ENCODE measurements at regions of chr3 and their contacts with region 1.

Region 1: GRCh38 chr3:194632809-194633348 is 340 bp downstream of the TMEM44 start:
- DNase-seq: no peak
- H3K4me3 ChIP-seq: peak overlapping the region; percentile 74
- H3K27ac ChIP-seq: no peak overlapping the region
- H3K4me1 ChIP-seq: no peaks in the 10 kb centered on the region
- H3K27me3 ChIP-seq: no peaks in the 10 kb centered on the region
- CTCF ChIP-seq: no peak

Region 2: GRCh38 chr3:194472290-194472920 is 160.5 kb before region 1 on chr3:
- CTCF ChIA-PET with region 1: interaction called, 3 read pairs
- POLR2A ChIA-PET with region 1: interaction called, 6 read pairs
- intact Hi-C with region 1: loop called (anchors 2 kb)
- DNase-seq: peak; percentile 31 to 67
- H3K4me3 ChIP-seq: no peak overlapping the region
- H3K27ac ChIP-seq: no peak overlapping the region
- H3K4me1 ChIP-seq: no peaks in the 10 kb centered on the region
- H3K27me3 ChIP-seq: no peaks in the 10 kb centered on the region
- CTCF ChIP-seq: peak; percentile 98

Region 3: GRCh38 chr3:194691481-194692283 is 58.8 kb after region 1 on chr3:
- CTCF ChIA-PET with region 1: no interaction called
- POLR2A ChIA-PET with region 1: no interaction called
- intact Hi-C with region 1: no loop called
- DNase-seq: no peak
- H3K4me3 ChIP-seq: no peak overlapping the region
- H3K27ac ChIP-seq: no peak overlapping the region
- H3K4me1 ChIP-seq: peaks cover 9% of the 10 kb centered on the region; the same call in 1 of the 2 replicates
- H3K27me3 ChIP-seq: no peaks in the 10 kb centered on the region
- CTCF ChIP-seq: no peak

Region 4: DNA sequence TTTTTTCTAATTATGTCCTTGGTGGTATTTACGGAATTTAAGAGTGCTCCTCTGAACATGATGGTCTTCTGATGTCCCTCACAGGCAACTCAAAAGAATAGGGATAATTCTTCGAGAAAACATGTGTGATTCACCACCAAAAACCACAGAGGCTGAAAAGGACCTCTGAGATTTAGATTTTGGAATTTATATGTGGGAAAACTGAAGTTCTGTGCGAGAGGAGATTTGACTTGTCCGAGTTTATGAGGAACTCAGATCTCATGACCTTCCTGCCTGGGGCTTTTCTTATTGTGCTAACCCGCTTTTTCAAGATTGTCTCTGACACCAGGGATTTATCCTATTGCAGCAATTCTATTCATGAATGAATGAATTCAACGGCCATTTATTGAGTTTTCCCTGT is 195.2 kb after region 1 on chr3:
- CTCF ChIA-PET with region 1: no interaction called
- POLR2A ChIA-PET with region 1: no interaction called
- intact Hi-C with region 1: no loop called
- DNase-seq: no peak
- H3K4me3 ChIP-seq: no peak overlapping the region
- H3K27ac ChIP-seq: no peak overlapping the region
- H3K4me1 ChIP-seq: no peaks in the 10 kb centered on the region
- H3K27me3 ChIP-seq: no peaks in the 10 kb centered on the region
- CTCF ChIP-seq: no peak

Measured in PC-9 (cell line).